Activated T-helper 2 cell treated with anti-CD3 and anti-CD28 coated beads, Interferon-gamma antibody, Interleukin-2, Interleukin-4, amounts not matched to agents 10 μg/mL and 5 μg/mL and 100 μg/mL, durations not matched to agents 14 hours and 24 hours and 36 hours (primary cell): ENCODE measurements at regions of chr16 and their contacts with region 1.

Region 1: DNA sequence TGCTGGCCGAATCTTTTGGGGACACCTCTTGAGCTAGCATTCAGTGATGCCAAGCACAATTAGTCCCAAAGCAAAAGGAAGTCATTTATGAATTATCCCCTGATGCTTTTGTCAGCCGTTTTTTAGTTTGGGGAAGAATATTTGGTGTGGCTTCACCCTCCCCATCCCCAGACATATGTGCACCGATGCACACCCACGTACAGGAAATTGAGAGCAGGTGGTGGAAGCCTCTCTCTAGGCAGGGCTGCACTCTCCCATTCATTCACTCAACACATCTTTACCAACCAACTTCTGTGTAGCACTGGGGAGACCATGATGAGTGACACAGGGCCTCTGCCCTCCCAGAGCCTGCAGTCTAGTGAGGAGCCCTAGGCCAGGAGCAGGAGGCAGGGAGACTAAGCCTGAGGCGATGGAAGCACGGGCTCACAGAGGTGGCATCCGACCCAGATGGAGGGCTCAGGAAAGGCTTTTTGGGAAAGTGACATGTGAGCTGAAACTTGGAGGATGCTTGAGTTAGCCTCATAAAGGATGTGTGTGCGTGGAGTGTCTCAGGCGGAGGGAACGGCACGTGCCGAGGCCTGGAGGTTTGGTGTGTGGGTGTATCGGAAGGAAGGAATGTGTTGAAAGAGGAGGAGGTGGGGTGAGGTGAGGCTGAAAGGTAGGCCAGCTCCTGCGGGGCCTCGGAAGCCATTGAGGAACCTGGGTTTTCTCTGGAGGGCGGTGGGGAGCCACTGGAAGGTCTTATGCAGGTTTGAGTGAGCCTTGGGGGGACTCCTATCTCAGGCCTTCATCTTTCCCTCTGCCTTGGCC is 43.8 kb downstream of the PSME3IP1 start:
- DNase-seq: no peak
- H3K4me3 Mint-ChIP-seq: peak overlapping the region; percentile 37
- H3K27ac Mint-ChIP-seq: peak overlapping the region; percentile 40
- H3K4me1 Mint-ChIP-seq: peaks cover 14% of the 10 kb centered on the region
- H3K27me3 Mint-ChIP-seq: no peaks in the 10 kb centered on the region

Region 2: DNA sequence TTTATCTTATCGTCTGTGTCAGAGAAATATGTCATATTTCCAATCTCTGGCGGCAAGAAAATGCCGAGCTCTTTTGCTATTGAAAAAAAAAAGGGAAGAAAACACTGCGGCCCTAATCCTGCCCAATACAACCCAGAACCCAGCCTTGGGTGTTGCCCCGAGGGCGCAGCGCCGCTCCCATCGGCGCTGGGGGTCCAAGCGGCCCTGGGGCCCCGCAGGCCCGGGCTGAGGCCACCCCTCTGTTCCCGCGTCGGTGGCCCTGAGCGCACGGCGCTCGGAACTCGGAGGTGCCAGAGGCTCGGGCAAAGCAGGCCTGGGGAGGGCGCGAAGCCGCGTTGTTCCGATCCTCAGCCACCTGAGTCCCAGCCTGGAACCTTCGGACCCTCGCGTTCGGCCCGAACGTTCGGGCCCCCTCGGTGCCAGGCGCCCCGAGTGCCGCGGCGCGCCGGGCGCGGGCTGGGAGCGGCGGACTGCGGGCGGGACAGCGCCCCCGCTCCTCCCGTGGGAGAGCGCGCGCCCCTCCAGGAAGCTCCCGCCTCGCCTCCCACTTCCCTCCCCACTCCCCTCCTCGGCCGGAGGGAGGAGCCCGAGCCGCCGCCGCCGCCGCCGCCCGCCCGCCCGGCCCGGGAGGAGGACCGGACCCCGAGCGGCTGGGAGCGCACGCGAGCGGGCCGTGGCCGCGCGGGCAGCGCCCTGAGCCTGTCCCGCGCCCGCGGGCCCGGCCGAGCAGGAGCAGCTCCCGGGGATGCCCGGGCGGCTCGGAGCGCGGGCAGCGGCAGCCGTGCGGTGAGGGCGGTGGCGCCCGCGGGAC is 49.8 kb before region 1 on chr16 and contains the start of gene CPNE2:
- intact Hi-C with region 1: loop called (anchors 2 kb)
- DNase-seq: peak; percentile 12
- H3K4me3 Mint-ChIP-seq: peak within 1 kb of the TSS; percentile 78
- H3K27ac Mint-ChIP-seq: no peak within 1 kb of the TSS
- H3K4me1 Mint-ChIP-seq: peaks cover 6% of the 10 kb centered on the region
- H3K27me3 Mint-ChIP-seq: peaks cover 25% of the 10 kb centered on the region
- total RNA-seq, gene CPNE2: 7.6 and 9.9 TPM in 2 replicates